ENCODE measurements at regions of chr4 and their contacts with region 1.

Region 1: GRCh38 chr4:77025643-77026321 is 50.0 kb downstream of the CCNI start:
- DNase-seq: peak; percentile 31
- H3K4me3 Mint-ChIP-seq: no peak overlapping the region
- H3K27ac Mint-ChIP-seq: no peak overlapping the region
- H3K4me1 Mint-ChIP-seq: peaks cover 39% of the 10 kb centered on the region
- H3K27me3 Mint-ChIP-seq: peaks cover 5% of the 10 kb centered on the region

Region 2: GRCh38 chr4:76407440-76408119 is 618.2 kb before region 1 on chr4:
- CTCF ChIA-PET with region 1: no interaction called
- intact Hi-C with region 1: loop called (anchors 2 kb)
- DNase-seq: no peak
- H3K4me3 Mint-ChIP-seq: no peak overlapping the region
- H3K27ac Mint-ChIP-seq: no peak overlapping the region
- H3K4me1 Mint-ChIP-seq: peaks cover 4% of the 10 kb centered on the region
- H3K27me3 Mint-ChIP-seq: peaks cover 7% of the 10 kb centered on the region

Region 3: GRCh38 chr4:76949276-76950051 is 76.3 kb before region 1 on chr4 and contains the start of gene SEPTIN11:
- CTCF ChIA-PET with region 1: no interaction called
- intact Hi-C with region 1: loop called (anchors 1 kb)
- DNase-seq: peak; percentile 81
- H3K4me3 Mint-ChIP-seq: peak within 1 kb of the TSS; percentile 81
- H3K27ac Mint-ChIP-seq: peak within 1 kb of the TSS; percentile 59
- H3K4me1 Mint-ChIP-seq: peaks cover 13% of the 10 kb centered on the region
- H3K27me3 Mint-ChIP-seq: peaks cover 31% of the 10 kb centered on the region
- total RNA-seq, gene SEPTIN11: 24.0 TPM

Region 4: DNA sequence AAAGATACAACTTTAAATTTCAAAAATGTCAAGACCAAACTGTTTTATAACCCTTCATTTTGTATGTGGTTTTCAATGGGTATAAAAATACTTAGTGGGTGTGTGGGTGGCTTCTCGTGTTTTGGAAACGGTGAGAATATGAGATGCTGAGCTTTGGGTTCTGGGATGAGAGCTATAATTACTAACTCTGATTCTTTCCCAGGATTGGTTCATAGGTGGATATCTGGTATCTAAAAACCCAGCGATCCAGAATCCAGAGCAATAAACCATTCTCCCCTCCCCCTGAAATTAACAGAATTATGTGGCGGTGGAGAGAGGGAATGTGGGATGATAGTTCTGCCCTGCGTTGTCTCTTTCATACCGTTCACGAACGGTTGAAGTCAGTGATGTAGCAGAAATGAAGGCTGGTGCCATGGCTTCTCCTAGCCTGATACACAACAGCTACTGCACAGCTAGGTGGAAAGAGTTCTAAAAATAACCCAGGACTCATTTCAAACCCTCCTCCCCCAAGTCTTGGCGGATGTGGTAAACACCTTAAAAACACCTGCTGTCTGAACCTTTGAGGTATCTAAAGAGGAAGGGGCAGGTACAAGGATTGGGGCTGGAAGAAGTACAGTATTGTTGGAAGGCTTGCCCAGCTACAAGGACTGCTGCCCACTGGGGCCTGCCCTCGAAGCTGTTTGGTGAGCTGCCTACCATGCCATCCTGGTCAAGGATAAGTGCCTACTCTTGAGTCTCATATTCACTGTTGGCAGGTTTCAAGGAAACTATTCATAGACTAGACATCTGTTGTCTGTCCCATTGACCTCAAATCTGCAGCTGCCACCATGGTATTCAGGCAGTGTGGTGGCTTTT is 31.8 kb before region 1 on chr4:
- CTCF ChIA-PET with region 1: no interaction called
- intact Hi-C with region 1: loop called (anchors 1 kb)
- DNase-seq: peak; percentile 82
- H3K4me3 Mint-ChIP-seq: peak overlapping the region; percentile 53
- H3K27ac Mint-ChIP-seq: peak overlapping the region; percentile 65
- H3K4me1 Mint-ChIP-seq: peaks cover 57% of the 10 kb centered on the region
- H3K27me3 Mint-ChIP-seq: no peaks in the 10 kb centered on the region

Region 5: DNA sequence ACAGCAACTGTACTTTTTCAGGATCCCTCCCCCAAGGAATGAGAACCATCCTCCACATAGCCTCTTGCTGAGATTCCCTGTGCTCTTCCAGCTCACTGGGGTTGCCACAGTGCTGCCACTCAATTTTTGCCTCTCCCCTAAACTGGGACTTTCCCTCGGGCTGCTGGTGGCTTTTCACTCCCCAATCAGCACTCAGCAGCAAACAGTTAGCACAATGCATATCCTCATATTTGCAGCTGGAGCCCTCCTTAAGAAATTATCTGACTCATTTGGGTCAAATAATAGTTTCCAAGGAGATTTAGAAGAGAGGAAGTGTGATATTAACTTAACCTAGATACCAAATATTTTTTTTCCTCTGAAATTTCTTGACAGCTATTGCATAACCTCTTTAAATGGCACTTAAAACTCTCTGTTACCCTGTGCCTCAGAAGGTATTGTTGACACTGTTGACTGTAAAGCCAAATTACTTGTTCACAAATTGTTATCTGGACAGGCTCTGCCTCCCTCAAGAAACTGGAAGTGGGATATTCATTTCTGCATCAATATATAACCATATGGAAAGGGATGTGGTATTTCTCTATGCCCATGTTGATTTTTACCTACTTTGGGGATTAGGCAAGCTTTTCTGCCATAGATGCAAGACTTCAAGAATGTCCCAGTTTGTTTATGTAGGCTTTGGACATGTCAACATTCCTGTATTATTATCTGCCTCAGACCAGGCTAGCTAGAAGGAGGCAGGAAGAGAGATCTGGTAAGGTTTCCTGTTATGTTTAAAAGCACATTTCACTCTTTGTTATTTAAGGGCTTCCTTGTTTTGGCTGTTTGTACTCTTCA is 18.2 kb before region 1 on chr4:
- CTCF ChIA-PET with region 1: no interaction called
- intact Hi-C with region 1: loop called (anchors 1 kb)
- DNase-seq: peak; percentile 60
- H3K4me3 Mint-ChIP-seq: no peak overlapping the region
- H3K27ac Mint-ChIP-seq: no peak overlapping the region
- H3K4me1 Mint-ChIP-seq: peaks cover 66% of the 10 kb centered on the region
- H3K27me3 Mint-ChIP-seq: no peaks in the 10 kb centered on the region

Region 6: DNA sequence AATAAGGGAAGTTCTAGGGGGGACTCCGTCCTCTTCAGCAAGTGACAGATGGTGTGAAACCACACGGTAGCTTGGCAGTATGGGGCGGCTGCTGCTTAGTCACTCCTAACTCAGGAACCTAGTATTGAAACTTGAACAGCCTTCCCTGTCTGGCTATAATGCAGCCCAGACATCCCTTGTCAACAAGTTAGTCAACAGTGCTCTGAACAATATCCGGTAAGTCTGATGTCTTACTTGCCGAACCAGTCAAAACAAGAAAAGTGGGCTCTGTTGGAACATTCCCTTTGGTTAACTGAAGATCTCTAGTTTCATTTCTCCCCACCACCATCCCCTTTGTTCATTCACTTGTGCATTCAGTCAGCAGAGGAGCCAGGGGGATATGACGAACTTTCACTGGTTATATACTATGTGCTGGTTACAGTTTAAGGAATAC is 561.2 kb after region 1 on chr4:
- CTCF ChIA-PET with region 1: no interaction called
- intact Hi-C with region 1: loop called (anchors 1 kb)
- DNase-seq: peak; percentile 87
- H3K4me3 Mint-ChIP-seq: peak overlapping the region; percentile 17
- H3K27ac Mint-ChIP-seq: peak overlapping the region; percentile 80
- H3K4me1 Mint-ChIP-seq: peaks cover 49% of the 10 kb centered on the region
- H3K27me3 Mint-ChIP-seq: peaks cover 15% of the 10 kb centered on the region

Measured in activated naive CD4-positive, alpha-beta T cell treated with anti-CD3 and anti-CD28 coated beads for 36 hours (primary cell).